ENCODE measurements at regions of chr1 and their contacts with region 1.

Region 1: DNA sequence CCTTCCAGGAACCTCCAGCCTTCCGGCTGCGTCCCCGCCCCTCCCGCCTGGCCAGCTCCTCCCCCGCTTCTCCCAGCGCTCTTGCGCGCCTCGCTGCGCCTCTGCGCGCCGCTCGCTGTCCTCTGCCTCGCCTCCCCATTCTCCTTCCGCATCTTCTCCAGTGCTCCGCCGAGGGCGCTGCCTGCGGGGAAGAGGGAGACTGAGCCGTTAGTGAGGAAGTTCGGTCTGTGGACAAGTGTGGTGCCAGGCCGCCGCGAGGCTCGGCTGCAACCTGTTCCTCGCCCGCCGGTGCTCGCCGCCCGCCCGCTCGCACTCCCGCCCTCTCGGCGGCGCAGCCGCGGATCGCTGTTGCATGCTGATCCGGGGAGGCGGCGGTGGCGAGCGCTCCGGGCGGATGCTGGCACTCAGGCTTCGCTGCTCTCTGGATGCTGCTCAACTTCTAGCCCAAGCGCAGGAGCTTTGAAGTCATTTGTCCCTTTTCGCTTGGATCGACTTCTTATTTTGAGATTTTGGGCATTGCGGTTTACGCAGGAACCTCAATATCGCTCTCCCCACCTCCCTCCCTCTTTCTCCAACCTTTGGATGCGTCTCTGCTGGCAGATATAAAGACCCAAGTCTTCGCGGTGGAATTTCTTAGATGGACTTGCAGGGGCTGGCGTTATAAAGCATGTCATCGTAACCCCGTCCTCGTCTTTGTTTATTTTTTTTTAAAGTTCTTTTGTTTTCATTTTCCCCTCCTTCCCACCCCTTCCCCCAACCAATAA is 614 bp upstream of the CACNA1E start:
- DNase-seq: no peak
- H3K4me3 ChIP-seq: peak overlapping the region; percentile 8 to 20
- H3K27ac ChIP-seq: no peak overlapping the region
- H3K4me1 ChIP-seq: peaks cover 23% of the 10 kb centered on the region
- H3K27me3 ChIP-seq: peaks cover 16% of the 10 kb centered on the region
- CTCF ChIP-seq: no peak
- POLR2A ChIP-seq: no peak

Region 2: GRCh38 chr1:181430015-181430885 is 52.5 kb before region 1 on chr1:
- intact Hi-C with region 1: no loop called
- DNase-seq: no peak
- H3K4me3 ChIP-seq: no peak overlapping the region
- H3K27ac ChIP-seq: no peak overlapping the region
- H3K4me1 ChIP-seq: no peaks in the 10 kb centered on the region
- H3K27me3 ChIP-seq: no peaks in the 10 kb centered on the region
- CTCF ChIP-seq: no peak
- POLR2A ChIP-seq: no peak

Region 3: DNA sequence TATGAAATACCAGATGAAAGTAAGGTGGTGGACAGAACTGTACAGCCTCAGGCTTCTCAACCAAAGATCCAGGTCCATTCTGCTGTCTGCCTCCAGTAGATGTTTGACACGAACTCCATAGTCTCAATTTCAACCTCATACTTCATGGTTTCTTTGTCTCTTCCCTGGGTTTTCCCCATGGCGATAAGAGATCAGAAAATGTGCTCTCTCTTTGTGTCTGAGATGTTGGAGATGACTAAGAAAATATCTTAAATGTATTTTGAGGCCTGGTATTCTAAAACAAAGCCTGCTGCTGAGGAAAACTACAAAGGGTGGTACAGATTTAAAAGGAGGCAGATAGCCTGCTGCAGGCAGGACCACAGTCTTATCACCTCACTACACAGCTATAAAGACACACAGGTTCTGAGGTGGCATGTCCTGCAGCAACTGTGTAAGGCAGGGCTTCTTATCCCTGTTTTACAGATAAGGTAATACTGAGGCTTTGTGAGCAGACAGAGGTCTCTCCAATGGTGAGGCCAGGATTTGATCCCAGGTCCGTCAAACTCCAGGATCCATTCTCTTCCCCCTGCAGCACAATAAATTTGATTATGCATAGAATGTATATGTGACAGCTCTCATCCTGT is 39.4 kb before region 1 on chr1:
- intact Hi-C with region 1: no loop called
- DNase-seq: no peak
- H3K4me3 ChIP-seq: no peak overlapping the region
- H3K27ac ChIP-seq: no peak overlapping the region
- H3K4me1 ChIP-seq: no peaks in the 10 kb centered on the region
- H3K27me3 ChIP-seq: no peaks in the 10 kb centered on the region
- CTCF ChIP-seq: no peak
- POLR2A ChIP-seq: no peak

Region 4: GRCh38 chr1:181676269-181676668 is 193.6 kb after region 1 on chr1:
- intact Hi-C with region 1: loop called (anchors 5 kb)
- DNase-seq: no peak
- H3K4me3 ChIP-seq: no peak overlapping the region
- H3K27ac ChIP-seq: no peak overlapping the region
- H3K4me1 ChIP-seq: no peaks in the 10 kb centered on the region
- H3K27me3 ChIP-seq: no peaks in the 10 kb centered on the region
- CTCF ChIP-seq: no peak
- POLR2A ChIP-seq: no peak

Region 5: GRCh38 chr1:183012301-183012994 is 1529.7 kb after region 1 on chr1:
- intact Hi-C with region 1: no loop called
- DNase-seq: no peak
- H3K4me3 ChIP-seq: no peak overlapping the region
- H3K27ac ChIP-seq: no peak overlapping the region
- H3K4me1 ChIP-seq: no peaks in the 10 kb centered on the region
- H3K27me3 ChIP-seq: no peaks in the 10 kb centered on the region
- CTCF ChIP-seq: no peak
- POLR2A ChIP-seq: no peak